ENCODE measurements at regions of chr22 and their contacts with region 1.

Region 1: GRCh38 chr22:24433813-24434470 is 6.5 kb downstream of the ADORA2A start:
- DNase-seq: peak; percentile 81
- H3K4me3 Mint-ChIP-seq: peak overlapping the region; percentile 69
- H3K27ac Mint-ChIP-seq: peak overlapping the region; percentile 100
- H3K4me1 Mint-ChIP-seq: peaks cover 86% of the 10 kb centered on the region
- H3K27me3 Mint-ChIP-seq: no peaks in the 10 kb centered on the region

Region 2: GRCh38 chr22:24270638-24271408 is 163.1 kb before region 1 on chr22 and contains the start of gene SPECC1L:
- CTCF ChIA-PET with region 1: no interaction called
- POLR2A ChIA-PET with region 1: no interaction called
- intact Hi-C with region 1: loop called (anchors 5 kb)
- DNase-seq: peak; percentile 94
- H3K4me3 Mint-ChIP-seq: peak within 1 kb of the TSS; percentile 82
- H3K27ac Mint-ChIP-seq: peak within 1 kb of the TSS; percentile 82
- H3K4me1 Mint-ChIP-seq: peaks cover 39% of the 10 kb centered on the region
- H3K27me3 Mint-ChIP-seq: no peaks in the 10 kb centered on the region
- total RNA-seq, gene SPECC1L: 27.7 to 34.3 TPM

Region 3: GRCh38 chr22:24402460-24403192 is 31.3 kb before region 1 on chr22:
- CTCF ChIA-PET with region 1: no interaction called
- POLR2A ChIA-PET with region 1: no interaction called
- intact Hi-C with region 1: loop called (anchors 2 kb)
- DNase-seq: no peak
- H3K4me3 Mint-ChIP-seq: no peak overlapping the region
- H3K27ac Mint-ChIP-seq: peak overlapping the region; percentile 16
- H3K4me1 Mint-ChIP-seq: peaks cover 41% of the 10 kb centered on the region
- H3K27me3 Mint-ChIP-seq: no peaks in the 10 kb centered on the region

Region 4: GRCh38 chr22:24423519-24424000 is 10.4 kb before region 1 on chr22:
- CTCF ChIA-PET with region 1: interaction called, 22 read pairs
- POLR2A ChIA-PET with region 1: interaction called, 16 read pairs
- intact Hi-C with region 1: no loop called
- DNase-seq: peak; percentile 73
- H3K4me3 Mint-ChIP-seq: peak overlapping the region; percentile 59
- H3K27ac Mint-ChIP-seq: no peak overlapping the region
- H3K4me1 Mint-ChIP-seq: peaks cover 25% of the 10 kb centered on the region
- H3K27me3 Mint-ChIP-seq: peaks cover 5% of the 10 kb centered on the region

Region 5: GRCh38 chr22:24486501-24486921 is 52.6 kb after region 1 on chr22:
- CTCF ChIA-PET with region 1: interaction called, 17 read pairs
- POLR2A ChIA-PET with region 1: interaction called, 21 read pairs
- intact Hi-C with region 1: loop called (anchors 1 kb)
- DNase-seq: peak; percentile 65
- H3K4me3 Mint-ChIP-seq: no peak overlapping the region
- H3K27ac Mint-ChIP-seq: peak overlapping the region; percentile 16
- H3K4me1 Mint-ChIP-seq: peaks cover 25% of the 10 kb centered on the region
- H3K27me3 Mint-ChIP-seq: no peaks in the 10 kb centered on the region

Region 6: DNA sequence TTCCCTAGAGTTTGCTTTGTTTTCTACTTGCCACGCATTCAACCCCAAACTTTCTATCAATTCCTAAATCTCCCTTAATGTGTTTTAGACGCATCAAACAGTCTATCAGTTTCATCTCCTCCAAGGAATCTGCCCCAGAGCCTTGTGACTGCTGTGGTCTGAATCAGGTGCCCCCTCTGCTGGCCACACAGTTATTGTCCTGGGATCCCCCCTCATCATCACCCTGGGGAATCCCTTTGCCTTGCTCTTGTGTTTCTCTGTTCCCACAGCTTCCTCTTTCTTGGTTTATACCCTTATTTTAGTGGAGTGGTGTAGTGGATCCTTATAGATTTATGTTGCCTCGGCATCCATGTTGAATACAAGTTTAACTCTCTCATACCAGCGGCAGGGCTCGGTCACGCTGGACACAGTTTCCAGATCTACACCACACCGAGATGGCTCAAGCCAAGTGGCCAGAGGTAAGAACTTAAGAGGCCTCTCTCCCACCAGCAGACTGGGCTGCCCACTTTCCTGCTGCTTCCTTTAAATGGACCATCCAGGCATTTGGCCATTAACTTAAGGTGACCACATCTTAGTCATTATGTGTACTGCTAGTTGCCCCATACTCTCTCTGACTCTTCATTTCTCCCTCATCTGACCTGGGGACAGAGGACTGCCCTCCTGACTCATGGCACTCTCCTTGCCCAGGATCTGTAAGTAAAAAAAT is 69.3 kb after region 1 on chr22:
- CTCF ChIA-PET with region 1: interaction called, 13 read pairs
- POLR2A ChIA-PET with region 1: no interaction called
- intact Hi-C with region 1: no loop called
- DNase-seq: peak; percentile 79
- H3K4me3 Mint-ChIP-seq: no peak overlapping the region
- H3K27ac Mint-ChIP-seq: no peak overlapping the region
- H3K4me1 Mint-ChIP-seq: peaks cover 7% of the 10 kb centered on the region
- H3K27me3 Mint-ChIP-seq: no peaks in the 10 kb centered on the region

Measured in activated CD4-positive, alpha-beta memory T cell treated with anti-CD3 and anti-CD28 coated beads for 36 hours (primary cell).